Mammary epithelial cell (primary cell): ENCODE measurements at regions of chr3 and their contacts with region 1.

Region 1: GRCh38 chr3:155352900-155353490 is 59.5 kb upstream of the STRIT1 start:
- DNase-seq: peak; percentile 33
- H3K4me3 ChIP-seq: no peak overlapping the region
- H3K27ac ChIP-seq: no peak overlapping the region
- H3K4me1 ChIP-seq: peaks cover 5% of the 10 kb centered on the region
- H3K27me3 ChIP-seq: no peaks in the 10 kb centered on the region
- CTCF ChIP-seq: peak; percentile 47 to 56

Region 2: DNA sequence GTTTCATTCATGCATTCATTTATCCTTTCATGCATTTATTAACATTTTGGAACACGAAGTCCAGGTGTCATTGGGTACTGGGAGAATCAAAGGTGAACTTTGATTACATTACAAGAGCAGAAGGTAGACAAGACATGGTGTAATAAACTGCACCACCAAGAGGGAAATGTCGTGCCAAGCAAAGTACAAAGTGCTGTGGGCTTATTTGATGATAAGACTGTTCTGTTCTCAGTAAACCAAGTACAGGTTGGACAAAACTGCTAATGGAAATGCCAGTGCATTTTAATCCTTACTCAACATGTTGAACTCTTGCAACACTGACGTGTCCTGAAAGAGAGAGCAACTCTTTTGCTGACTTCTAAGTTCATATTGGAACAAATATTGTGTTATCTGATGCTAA is 203.5 kb before region 1 on chr3:
- CTCF ChIA-PET with region 1: no interaction called
- dilution Hi-C with region 1: no loop called
- in situ Hi-C with region 1: no loop called
- intact Hi-C with region 1: no loop called
- DNase-seq: no peak
- H3K4me3 ChIP-seq: no peak overlapping the region
- H3K27ac ChIP-seq: no peak overlapping the region
- H3K4me1 ChIP-seq: no peaks in the 10 kb centered on the region
- H3K27me3 ChIP-seq: no peaks in the 10 kb centered on the region
- CTCF ChIP-seq: no peak

Region 3: DNA sequence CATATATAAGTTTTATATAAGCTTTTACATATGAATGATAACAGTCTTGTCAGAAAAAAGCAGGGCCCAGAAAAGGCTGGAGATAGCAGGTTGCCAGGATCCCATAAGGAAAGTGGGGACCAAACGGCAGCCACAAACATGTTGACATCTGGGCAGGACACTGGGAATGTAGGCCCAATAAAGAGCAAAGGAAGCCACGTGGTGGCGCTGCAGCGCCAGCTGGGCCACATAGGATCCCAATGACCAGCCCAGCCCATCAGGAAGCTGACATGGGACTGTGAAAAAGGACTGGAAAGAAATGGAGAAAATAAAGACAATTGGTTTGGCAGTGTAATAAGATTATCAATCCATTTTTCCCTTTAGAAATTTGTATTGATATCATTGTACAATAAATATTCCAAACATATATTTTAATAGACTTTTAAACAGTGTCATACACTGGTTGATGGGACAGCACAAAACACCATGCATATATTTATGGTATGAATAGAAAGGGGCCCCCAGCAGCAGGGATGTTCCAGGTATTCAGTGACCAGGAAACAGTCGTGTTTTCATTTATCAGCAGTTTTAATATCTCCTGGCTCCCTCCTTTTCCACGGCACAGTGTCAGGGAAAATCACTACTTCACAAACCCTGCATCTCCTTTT is 29.5 kb after region 1 on chr3:
- CTCF ChIA-PET with region 1: no interaction called
- dilution Hi-C with region 1: no loop called
- in situ Hi-C with region 1: no loop called
- intact Hi-C with region 1: loop called (anchors 2 kb)
- DNase-seq: peak; percentile 52
- H3K4me3 ChIP-seq: no peak overlapping the region
- H3K27ac ChIP-seq: no peak overlapping the region
- H3K4me1 ChIP-seq: peaks cover 6% of the 10 kb centered on the region
- H3K27me3 ChIP-seq: no peaks in the 10 kb centered on the region
- CTCF ChIP-seq: peak; percentile 81 to 94

Region 4: DNA sequence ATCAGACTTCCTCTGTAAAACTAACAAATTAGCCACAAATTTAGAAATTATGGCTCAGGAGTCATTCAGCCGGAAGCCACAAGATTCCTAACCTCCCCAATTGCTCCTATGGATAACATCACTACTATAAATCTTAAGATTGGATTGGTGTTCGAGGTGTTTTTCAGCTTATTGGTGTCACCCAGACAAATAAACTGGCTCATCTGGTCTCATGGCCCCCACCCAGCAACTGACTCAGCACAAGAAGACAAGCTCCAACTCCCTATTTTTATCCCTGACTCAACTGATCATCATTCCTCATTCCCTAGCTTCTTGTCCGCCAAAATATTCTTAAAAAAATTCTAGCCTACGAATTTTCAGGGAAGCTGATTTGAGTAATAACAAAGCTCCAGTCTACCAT is 75.6 kb after region 1 on chr3:
- CTCF ChIA-PET with region 1: no interaction called
- dilution Hi-C with region 1: no loop called
- in situ Hi-C with region 1: no loop called
- intact Hi-C with region 1: no loop called
- DNase-seq: no peak
- H3K4me3 ChIP-seq: no peak overlapping the region
- H3K27ac ChIP-seq: no peak overlapping the region
- H3K4me1 ChIP-seq: peaks cover 9% of the 10 kb centered on the region
- H3K27me3 ChIP-seq: no peaks in the 10 kb centered on the region
- CTCF ChIP-seq: no peak

Region 5: DNA sequence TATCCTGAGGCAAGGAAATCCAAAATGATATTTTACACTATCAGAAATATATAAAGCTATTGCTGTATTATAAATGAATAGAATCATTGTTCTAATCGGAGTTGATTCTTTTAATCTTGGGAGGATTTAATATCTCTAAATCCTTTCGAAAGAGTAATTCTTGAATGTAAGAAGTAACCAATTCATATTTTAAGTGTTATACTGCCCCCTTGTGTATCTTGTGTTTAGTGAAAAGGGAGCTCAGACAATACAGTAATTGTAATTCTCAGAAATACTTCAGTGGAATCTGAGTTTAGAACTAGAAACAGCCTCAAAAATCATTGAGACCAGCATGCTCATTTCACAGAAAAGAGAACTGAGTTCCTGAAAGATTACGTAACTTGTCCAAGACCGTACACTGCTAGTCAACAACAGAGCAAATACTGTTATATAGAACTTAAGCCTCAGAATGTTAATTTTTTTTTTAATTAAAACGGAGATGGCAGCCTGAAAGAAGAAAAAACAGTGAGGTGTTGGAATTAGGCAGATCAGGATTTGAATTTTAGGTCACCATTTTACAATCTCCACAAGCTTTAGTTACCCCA is 349.0 kb after region 1 on chr3:
- CTCF ChIA-PET with region 1: interaction called, 8 read pairs
- dilution Hi-C with region 1: no loop called
- in situ Hi-C with region 1: loop called in 1 of 2 experiments (anchors 10 kb)
- intact Hi-C with region 1: loop called (anchors 1 kb)
- DNase-seq: peak; percentile 32
- H3K4me3 ChIP-seq: no peak overlapping the region
- H3K27ac ChIP-seq: no peak overlapping the region
- H3K4me1 ChIP-seq: peaks cover 22% of the 10 kb centered on the region
- H3K27me3 ChIP-seq: no peaks in the 10 kb centered on the region
- CTCF ChIP-seq: peak; percentile 54 to 61

Region 6: DNA sequence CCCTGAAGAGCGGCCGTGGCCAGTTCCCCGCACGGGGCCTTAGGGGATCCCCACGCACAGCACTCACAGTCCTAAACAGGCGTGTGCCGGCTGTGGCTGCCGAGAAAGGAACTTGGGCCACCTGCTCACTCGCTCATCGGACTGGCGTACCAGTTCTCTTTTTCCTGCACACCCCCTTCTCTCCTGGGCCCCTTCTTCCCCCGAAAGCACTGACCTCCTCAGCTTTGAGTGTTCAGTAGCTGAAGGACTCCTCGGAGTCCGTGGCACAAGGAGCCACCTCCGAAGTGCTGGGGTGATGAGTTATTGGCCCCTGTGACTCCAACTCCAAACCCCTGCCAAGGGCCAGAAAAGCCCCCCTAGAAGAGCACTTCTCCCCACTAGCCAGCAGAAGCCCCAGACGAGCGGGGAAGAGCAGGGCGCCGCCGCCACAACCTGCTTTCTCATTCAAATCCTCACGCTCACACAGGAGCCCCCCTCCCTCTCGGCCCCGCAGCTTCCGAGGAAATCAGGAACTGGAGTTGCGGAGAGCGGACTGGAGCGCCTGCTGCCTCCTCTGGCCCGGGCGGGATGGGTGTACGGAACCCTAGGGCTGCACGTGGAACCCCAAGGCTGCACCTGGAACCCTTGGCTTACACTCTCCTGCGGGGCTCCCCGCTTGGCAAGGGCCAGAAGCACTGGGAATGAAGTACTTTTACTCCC is 391.8 kb after region 1 on chr3 and contains the start of gene PLCH1:
- CTCF ChIA-PET with region 1: no interaction called
- dilution Hi-C with region 1: no loop called
- in situ Hi-C with region 1: no loop called
- intact Hi-C with region 1: loop called (anchors 5 kb)
- DNase-seq: no peak
- H3K4me3 ChIP-seq: peak within 1 kb of the TSS; percentile 64 to 74 (median 67)
- H3K27ac ChIP-seq: no peak within 1 kb of the TSS
- H3K4me1 ChIP-seq: peaks cover 9% of the 10 kb centered on the region
- H3K27me3 ChIP-seq: peaks cover 2% of the 10 kb centered on the region
- CTCF ChIP-seq: no peak
- total RNA-seq, gene PLCH1: 0.28 to 4.3 TPM